ENCODE measurements at regions of chr3 and their contacts with region 1.

Region 1: GRCh38 chr3:114408736-114409670 is 115.2 kb downstream of the TIGIT start:
- DNase-seq: no peak
- H3K4me3 ChIP-seq: no peak overlapping the region
- H3K27ac ChIP-seq: no peak overlapping the region
- H3K4me1 ChIP-seq: no peaks in the 10 kb centered on the region
- CTCF ChIP-seq: no peak

Region 2: DNA sequence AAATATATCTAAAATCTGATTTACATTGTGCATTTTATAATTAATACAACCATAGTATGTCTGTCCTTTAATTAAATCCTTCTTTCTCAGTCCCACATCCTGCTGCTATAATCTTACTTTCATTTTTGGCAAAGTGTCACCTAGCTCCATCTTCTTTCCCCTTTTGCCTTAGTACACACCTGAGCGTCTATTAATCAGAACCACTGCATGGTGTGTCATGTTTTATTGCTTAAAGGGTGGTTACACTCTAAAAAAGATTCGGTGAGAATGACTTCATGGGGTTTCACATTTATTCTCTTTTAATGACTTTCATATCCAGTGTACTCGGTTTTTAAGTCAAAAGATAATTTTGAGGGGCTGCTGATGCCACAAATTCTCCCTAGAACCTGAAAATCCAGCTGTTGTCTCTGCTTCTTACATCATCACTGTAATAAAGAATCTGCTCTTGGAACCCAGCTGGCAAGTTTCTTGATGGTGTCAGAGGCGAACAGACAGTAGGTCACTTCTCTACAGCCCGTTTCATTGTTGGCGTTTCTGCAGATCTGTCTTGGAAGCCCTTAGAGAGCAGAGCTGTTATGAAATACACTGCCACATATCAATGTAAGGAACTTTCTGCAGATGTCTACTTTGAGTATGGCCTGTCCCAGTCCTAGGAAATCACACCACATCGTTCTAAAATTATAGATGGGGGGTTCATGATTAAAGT is 15.5 kb before region 1 on chr3:
- CTCF ChIA-PET with region 1: no interaction called
- POLR2A ChIA-PET with region 1: interaction called, 13 read pairs
- intact Hi-C with region 1: no loop called
- DNase-seq: no peak
- H3K4me3 ChIP-seq: no peak overlapping the region
- H3K27ac ChIP-seq: no peak overlapping the region
- H3K4me1 ChIP-seq: no peaks in the 10 kb centered on the region
- CTCF ChIP-seq: no peak

Measured in OCI-LY7 (cell line).